ENCODE measurements at regions of chr17 and their contacts with region 1.

Region 1: GRCh38 chr17:7004398-7005253 is 7.8 kb upstream of the RNASEK start:
- DNase-seq: peak in 1 of 2 donors; percentile 81
- H3K4me3 ChIP-seq: no peak overlapping the region
- H3K27ac ChIP-seq: no peak overlapping the region
- H3K4me1 ChIP-seq: peaks cover 2 to 25% (median 14%) of the 10 kb centered on the region in 4 donors
- H3K27me3 ChIP-seq: no peaks in the 10 kb centered on the region
- CTCF ChIP-seq: peak in 5 of 7 experiments; percentile 15 to 68 (median 48)
- EP300 ChIP-seq: no peak
- POLR2A ChIP-seq: no peak

Region 2: DNA sequence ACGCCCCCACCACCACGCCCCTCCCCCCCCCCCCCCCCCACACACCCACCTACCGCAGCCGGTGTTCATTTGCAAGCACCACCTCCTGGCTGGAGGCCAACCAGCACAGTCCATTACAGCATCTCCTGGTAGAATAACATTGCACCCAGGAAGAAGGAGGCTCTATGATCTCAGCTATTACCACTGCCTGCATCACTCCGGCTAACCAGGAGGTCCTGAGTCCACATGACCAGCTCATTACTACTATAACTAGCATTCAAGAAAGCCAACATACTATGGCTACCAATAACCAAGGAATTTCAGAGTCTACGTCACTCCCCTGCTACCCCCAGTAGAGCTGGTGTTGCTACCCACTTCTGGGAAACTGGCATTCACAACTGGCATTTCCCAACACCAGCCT is 89.9 kb before region 1 on chr17:
- intact Hi-C with region 1: loop called (anchors 5 kb)
- DNase-seq: no peak
- H3K4me3 ChIP-seq: no peak overlapping the region
- H3K27ac ChIP-seq: no peak overlapping the region
- H3K4me1 ChIP-seq: peaks cover 0 to 12% (median 10%) of the 10 kb centered on the region in 4 donors
- H3K27me3 ChIP-seq: peaks cover 0 to 23% (median 0%) of the 10 kb centered on the region in 3 donors
- CTCF ChIP-seq: no peak
- EP300 ChIP-seq: no peak
- POLR2A ChIP-seq: no peak

Region 3: GRCh38 chr17:6948562-6948961 is 56.1 kb before region 1 on chr17:
- intact Hi-C with region 1: no loop called
- DNase-seq: peak in 1 of 2 donors; percentile 17
- H3K4me3 ChIP-seq: no peak overlapping the region
- H3K27ac ChIP-seq: no peak overlapping the region
- H3K4me1 ChIP-seq: no peaks in the 10 kb centered on the region
- H3K27me3 ChIP-seq: no peaks in the 10 kb centered on the region
- CTCF ChIP-seq: no peak
- EP300 ChIP-seq: no peak
- POLR2A ChIP-seq: no peak

Region 4: GRCh38 chr17:7072406-7072805 is 67.8 kb after region 1 on chr17:
- intact Hi-C with region 1: no loop called
- DNase-seq: no peak
- H3K4me3 ChIP-seq: no peak overlapping the region
- H3K27ac ChIP-seq: no peak overlapping the region
- H3K4me1 ChIP-seq: no peaks in the 10 kb centered on the region
- H3K27me3 ChIP-seq: peaks cover 0 to 5% (median 0%) of the 10 kb centered on the region in 3 donors
- CTCF ChIP-seq: no peak
- EP300 ChIP-seq: no peak
- POLR2A ChIP-seq: no peak